ENCODE measurements at regions of chr14 and their contacts with region 1.

Region 1: DNA sequence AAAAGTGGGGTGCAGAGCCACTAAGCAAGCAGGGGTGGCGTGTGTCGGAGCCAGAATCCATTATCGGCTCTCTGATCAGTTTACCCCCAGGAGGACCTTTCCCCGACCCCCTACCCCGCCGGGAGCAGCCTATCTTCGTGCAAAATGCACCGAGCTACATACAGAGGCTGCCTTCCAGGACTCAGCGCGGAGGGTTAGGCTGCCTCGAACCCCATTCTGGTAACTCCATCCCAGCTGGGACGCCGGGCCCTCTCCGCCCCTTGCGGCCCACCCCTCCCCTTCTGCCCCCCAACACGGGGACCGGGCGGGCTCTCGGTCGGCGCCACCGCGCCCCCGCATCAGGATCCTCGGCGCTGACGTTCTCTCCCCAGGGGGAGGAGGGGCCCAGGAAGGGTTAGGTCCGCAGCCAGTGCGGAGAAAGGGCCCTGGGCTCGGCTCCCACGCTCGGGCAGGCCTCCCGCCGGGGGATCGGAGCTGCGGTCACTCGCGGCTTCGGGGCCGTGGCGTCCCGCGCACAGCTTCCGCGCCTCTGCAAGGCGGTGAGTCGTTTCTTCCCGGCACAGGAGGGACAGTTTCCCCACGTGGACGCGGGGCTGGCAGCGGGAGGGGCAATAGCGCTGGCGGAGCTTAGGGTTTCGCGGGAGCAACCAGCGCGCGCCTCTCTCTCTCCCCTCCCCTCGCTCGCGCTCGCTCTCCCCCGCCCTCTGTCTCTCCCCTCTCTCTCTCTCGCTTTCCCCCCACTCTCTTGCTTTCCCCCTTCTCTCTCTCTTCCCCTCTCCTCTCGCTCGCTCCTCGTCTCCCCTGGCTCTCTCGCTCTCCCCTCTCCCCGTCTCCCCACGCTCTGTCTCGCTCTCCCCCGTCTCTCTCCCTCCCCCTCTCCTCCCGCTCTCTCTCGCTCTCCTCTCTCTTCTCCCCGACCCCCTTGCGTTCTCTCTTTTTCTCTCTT is 12.5 kb upstream of the MAP3K9 start:
- DNase-seq: peak; percentile 60
- H3K4me3 Mint-ChIP-seq: peak overlapping the region; percentile 76
- H3K27ac Mint-ChIP-seq: no peak overlapping the region
- H3K4me1 Mint-ChIP-seq: peaks cover 18% of the 10 kb centered on the region
- H3K27me3 Mint-ChIP-seq: peaks cover 36% of the 10 kb centered on the region

Region 2: GRCh38 chr14:70735043-70735442 is 86.8 kb before region 1 on chr14:
- CTCF ChIA-PET with region 1: no interaction called
- POLR2A ChIA-PET with region 1: no interaction called
- DNase-seq: no peak
- H3K4me3 Mint-ChIP-seq: no peak overlapping the region
- H3K27ac Mint-ChIP-seq: no peak overlapping the region
- H3K4me1 Mint-ChIP-seq: no peaks in the 10 kb centered on the region
- H3K27me3 Mint-ChIP-seq: no peaks in the 10 kb centered on the region

Region 3: DNA sequence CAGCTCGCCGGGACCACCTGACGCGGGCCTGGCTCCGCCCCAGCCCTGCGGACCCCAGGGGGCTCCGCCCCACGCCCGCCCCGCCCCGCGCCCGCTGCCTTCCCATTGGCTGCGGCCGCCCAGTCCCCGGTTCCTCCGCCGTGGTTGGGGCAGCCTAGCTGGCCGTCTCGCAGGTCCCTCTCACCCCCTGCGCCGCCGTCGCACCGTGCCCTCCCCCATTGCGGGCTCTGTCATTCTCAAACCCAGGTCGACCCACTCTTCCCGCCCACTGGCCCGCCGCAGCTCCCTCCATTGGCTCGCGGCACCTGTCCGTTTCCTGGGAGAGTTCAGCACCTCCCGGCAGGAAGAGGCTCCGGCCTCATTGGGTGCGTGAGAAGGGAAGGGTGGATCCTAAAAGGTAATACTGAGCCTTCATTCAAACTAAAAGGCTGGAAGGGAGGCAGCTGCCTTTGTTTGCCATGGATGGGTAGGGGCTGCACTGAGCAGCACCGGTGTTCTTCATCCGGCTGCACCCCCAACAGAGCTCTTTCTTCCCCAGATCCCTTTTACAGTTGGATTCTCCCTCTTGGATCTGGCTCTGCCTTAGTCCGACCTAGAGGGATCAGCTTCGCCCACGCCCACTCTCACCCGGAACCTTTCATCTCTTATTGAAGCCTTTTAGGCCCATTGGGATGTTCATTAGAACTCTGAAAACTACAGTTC is 12.2 kb before region 1 on chr14:
- CTCF ChIA-PET with region 1: interaction called, 27 read pairs
- POLR2A ChIA-PET with region 1: interaction called, 16 read pairs
- DNase-seq: peak; percentile 93
- H3K4me3 Mint-ChIP-seq: no peak overlapping the region
- H3K27ac Mint-ChIP-seq: peak overlapping the region; percentile 63
- H3K4me1 Mint-ChIP-seq: peaks cover 11% of the 10 kb centered on the region
- H3K27me3 Mint-ChIP-seq: peaks cover 10% of the 10 kb centered on the region

Region 4: DNA sequence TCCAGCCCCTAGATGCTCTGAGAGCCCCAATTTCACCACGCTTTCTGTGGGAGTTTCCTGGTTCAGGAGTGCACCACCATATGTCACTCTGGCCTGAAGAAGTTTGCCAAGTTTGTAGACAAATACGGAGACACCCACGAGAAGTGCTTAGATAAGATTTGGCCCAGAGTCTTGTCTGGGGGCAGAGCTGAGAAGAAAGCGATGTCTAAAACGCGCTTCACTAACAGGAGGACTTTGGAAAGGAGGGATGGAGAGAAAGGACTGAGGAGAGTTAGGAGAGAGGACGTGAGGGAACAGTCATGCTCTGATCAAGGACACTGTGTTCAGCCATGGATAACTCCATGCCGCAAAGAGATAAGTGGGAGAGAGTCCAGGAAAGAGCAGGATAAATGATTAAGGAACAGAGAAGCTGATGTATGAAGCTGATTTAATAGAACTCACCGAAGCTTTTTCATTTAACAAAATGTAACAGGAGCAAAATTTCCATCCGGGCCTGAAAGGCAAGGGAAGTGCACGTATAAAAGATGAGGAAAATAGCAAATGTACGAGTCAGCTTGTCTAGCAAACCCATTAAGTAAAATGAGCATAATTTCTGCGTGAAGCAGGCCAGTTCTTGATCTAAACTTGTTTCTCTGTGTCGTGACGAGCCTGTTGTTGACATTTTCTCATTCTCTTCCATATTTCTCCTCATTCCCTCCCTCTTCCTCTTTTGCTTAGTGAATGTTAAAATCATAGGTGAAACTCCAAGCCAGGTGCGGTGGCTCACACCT is 10.9 kb after region 1 on chr14:
- CTCF ChIA-PET with region 1: interaction called, 19 read pairs
- POLR2A ChIA-PET with region 1: interaction called, 4 read pairs
- DNase-seq: no peak
- H3K4me3 Mint-ChIP-seq: no peak overlapping the region
- H3K27ac Mint-ChIP-seq: no peak overlapping the region
- H3K4me1 Mint-ChIP-seq: peaks cover 2% of the 10 kb centered on the region
- H3K27me3 Mint-ChIP-seq: peaks cover 2% of the 10 kb centered on the region

Region 5: DNA sequence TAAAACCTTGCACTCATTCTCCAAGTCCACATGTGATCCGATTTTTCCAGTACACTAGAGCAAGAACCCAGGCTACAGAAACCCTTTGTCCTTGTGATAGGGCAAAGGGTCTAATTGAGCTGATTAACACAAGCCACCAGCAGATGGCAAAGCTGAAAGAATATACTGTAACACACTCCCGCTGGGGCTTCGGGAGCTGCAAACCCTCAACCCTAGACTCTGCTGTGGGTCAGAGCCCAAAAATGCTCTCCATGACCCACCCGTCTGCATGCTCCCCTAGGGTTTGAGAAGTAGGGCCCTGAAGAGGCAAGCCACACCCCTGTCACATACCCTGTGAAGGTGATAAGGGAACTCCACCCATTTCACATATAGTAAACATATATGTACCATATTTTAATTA is 51.8 kb after region 1 on chr14:
- CTCF ChIA-PET with region 1: interaction called, 11 read pairs
- POLR2A ChIA-PET with region 1: no interaction called
- DNase-seq: no peak
- H3K4me3 Mint-ChIP-seq: no peak overlapping the region
- H3K27ac Mint-ChIP-seq: no peak overlapping the region
- H3K4me1 Mint-ChIP-seq: peaks cover 25% of the 10 kb centered on the region
- H3K27me3 Mint-ChIP-seq: no peaks in the 10 kb centered on the region

Region 6: GRCh38 chr14:70887207-70887681 is 65.4 kb after region 1 on chr14:
- CTCF ChIA-PET with region 1: interaction called, 32 read pairs
- POLR2A ChIA-PET with region 1: interaction called, 14 read pairs
- DNase-seq: no peak
- H3K4me3 Mint-ChIP-seq: peak overlapping the region; percentile 68
- H3K27ac Mint-ChIP-seq: peak overlapping the region; percentile 94
- H3K4me1 Mint-ChIP-seq: peaks cover 92% of the 10 kb centered on the region
- H3K27me3 Mint-ChIP-seq: peaks cover 2% of the 10 kb centered on the region

Region 7: GRCh38 chr14:70942342-70942706 is 120.5 kb after region 1 on chr14:
- CTCF ChIA-PET with region 1: interaction called, 11 read pairs
- POLR2A ChIA-PET with region 1: interaction called, 3 read pairs
- DNase-seq: no peak
- H3K4me3 Mint-ChIP-seq: no peak overlapping the region
- H3K27ac Mint-ChIP-seq: peak overlapping the region; percentile 70
- H3K4me1 Mint-ChIP-seq: peaks cover 57% of the 10 kb centered on the region
- H3K27me3 Mint-ChIP-seq: no peaks in the 10 kb centered on the region

Region 8: GRCh38 chr14:70972107-70972976 is 150.5 kb after region 1 on chr14:
- CTCF ChIA-PET with region 1: interaction called, 11 read pairs
- POLR2A ChIA-PET with region 1: interaction called, 3 read pairs
- DNase-seq: peak; percentile 86
- H3K4me3 Mint-ChIP-seq: no peak overlapping the region
- H3K27ac Mint-ChIP-seq: no peak overlapping the region
- H3K4me1 Mint-ChIP-seq: peaks cover 22% of the 10 kb centered on the region
- H3K27me3 Mint-ChIP-seq: no peaks in the 10 kb centered on the region